ENCODE measurements at regions of chr4 and their contacts with region 1.

Region 1: GRCh38 chr4:147674496-147674895 is 9.5 kb downstream of the PRMT9 start:
- DNase-seq: no peak
- ATAC-seq: no peak
- H3K4me3 ChIP-seq: no peak overlapping the region
- H3K4me3 Mint-ChIP-seq: no peak overlapping the region
- H3K27ac ChIP-seq: no peak overlapping the region
- H3K27ac Mint-ChIP-seq: no peak overlapping the region
- H3K4me1 ChIP-seq: no peaks in the 10 kb centered on the region
- H3K4me1 Mint-ChIP-seq: peaks cover 4% of the 10 kb centered on the region
- H3K27me3 ChIP-seq: no peaks in the 10 kb centered on the region
- H3K27me3 Mint-ChIP-seq: no peaks in the 10 kb centered on the region
- CTCF ChIP-seq: no peak

Region 2: GRCh38 chr4:147633113-147633512 is 41.4 kb before region 1 on chr4:
- CTCF ChIA-PET with region 1: no interaction called
- POLR2A ChIA-PET with region 1: no interaction called
- intact Hi-C with region 1: loop called in 1 of 2 experiments (anchors 5 kb)
- DNase-seq: no peak
- ATAC-seq: no peak
- H3K4me3 ChIP-seq: no peak overlapping the region
- H3K4me3 Mint-ChIP-seq: no peak overlapping the region
- H3K27ac ChIP-seq: no peak overlapping the region
- H3K27ac Mint-ChIP-seq: no peak overlapping the region
- H3K4me1 ChIP-seq: no peaks in the 10 kb centered on the region
- H3K4me1 Mint-ChIP-seq: peaks cover 7% of the 10 kb centered on the region
- H3K27me3 ChIP-seq: no peaks in the 10 kb centered on the region
- H3K27me3 Mint-ChIP-seq: no peaks in the 10 kb centered on the region
- CTCF ChIP-seq: no peak

Region 3: DNA sequence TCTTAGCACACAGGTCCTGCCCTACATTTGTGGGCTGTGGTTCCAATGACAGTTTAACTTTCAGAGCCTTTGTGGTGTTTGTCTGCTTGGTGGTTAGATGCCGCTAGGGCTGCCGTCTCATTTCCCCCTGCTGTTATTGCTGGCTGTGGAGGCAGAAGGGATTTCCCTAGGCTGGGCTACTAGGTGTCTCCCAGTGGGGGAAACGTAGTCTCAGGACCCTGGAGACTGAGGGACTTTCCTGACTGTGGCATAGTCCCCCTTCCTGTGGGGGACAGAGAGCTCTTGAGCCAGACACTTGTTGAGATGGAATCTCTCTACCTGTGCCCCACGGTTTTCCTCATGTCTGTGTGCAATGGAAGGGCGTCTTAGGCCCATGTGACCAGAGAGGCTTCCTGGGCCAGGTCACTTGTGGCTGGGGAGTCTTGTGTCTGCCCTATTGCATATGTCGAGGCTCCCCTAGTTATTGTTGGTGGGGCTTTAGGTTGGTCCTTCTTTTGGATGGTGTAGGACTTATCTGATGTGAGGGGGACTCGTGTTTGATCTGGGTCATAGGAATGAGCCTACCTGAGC is 125.6 kb after region 1 on chr4:
- CTCF ChIA-PET with region 1: no interaction called
- POLR2A ChIA-PET with region 1: no interaction called
- intact Hi-C with region 1: no loop called
- DNase-seq: peak; percentile 30 to 93 (median 59)
- ATAC-seq: peak; percentile 91
- H3K4me3 ChIP-seq: no peak overlapping the region
- H3K4me3 Mint-ChIP-seq: peak overlapping the region; percentile 36
- H3K27ac ChIP-seq: no peak overlapping the region
- H3K27ac Mint-ChIP-seq: peak overlapping the region; percentile 47
- H3K4me1 ChIP-seq: peaks cover 15% of the 10 kb centered on the region
- H3K4me1 Mint-ChIP-seq: peaks cover 24% of the 10 kb centered on the region
- H3K27me3 ChIP-seq: no peaks in the 10 kb centered on the region
- H3K27me3 Mint-ChIP-seq: no peaks in the 10 kb centered on the region
- CTCF ChIP-seq: no peak

Measured in CD8-positive, alpha-beta T cell (primary cell).